HCT116 (cell line): ENCODE measurements at regions of chr1 and their contacts with region 1.

Region 1: GRCh38 chr1:112337028-112337531 is 58.9 kb upstream of the CTTNBP2NL start:
- DNase-seq: peak; percentile 51
- ATAC-seq: peak; percentile 95
- H3K4me3 ChIP-seq: peak overlapping the region; percentile 21 to 50
- H3K27ac ChIP-seq: no peak overlapping the region
- H3K4me1 ChIP-seq: peaks cover 4 to 8% of the 10 kb centered on the region in 2 experiments
- H3K27me3 ChIP-seq: peaks cover 17% of the 10 kb centered on the region; the same call in 1 of the 2 replicates
- CTCF ChIP-seq: peak; percentile 73 to 90 (median 76)
- POLR2A ChIP-seq: no peak
- RAD21 ChIP-seq: peak; percentile 86

Region 2: DNA sequence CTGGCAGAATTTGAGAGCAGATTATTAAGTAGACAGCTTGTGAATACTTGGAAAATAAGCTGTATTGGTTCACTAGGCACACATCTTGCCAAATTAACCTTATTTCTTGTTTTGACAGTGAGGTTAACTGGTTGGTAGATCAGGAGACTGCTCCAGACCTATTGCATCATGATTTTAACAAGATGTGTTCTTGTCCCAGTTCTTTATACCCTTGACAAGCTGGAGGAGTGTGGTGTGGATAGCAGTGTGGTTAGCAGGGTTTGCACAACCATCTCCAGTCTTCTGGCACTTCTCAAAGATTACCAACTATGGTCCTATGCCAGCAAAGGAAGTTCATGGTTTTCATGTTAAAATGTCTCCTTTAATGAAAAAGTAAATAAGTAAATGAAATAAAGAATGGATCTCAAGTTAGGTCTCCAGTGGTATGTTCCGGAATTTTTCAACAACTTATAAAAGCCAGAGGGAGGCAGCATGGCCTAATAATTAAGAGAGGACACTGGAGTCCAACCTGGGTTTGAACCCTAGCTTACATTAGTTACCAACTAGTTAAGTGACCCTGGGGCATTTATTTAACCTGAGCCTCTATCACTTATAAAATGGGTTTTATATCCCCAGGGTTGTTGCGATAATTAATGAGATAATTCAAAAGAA is 547.3 kb before region 1 on chr1:
- CTCF ChIA-PET with region 1: interaction called, 5 read pairs
- POLR2A ChIA-PET with region 1: no interaction called
- RAD21 ChIA-PET with region 1: no interaction called
- intact Hi-C with region 1: loop called (anchors 10 kb)
- DNase-seq: no peak
- ATAC-seq: no peak
- H3K4me3 ChIP-seq: no peak overlapping the region
- H3K27ac ChIP-seq: no peak overlapping the region
- H3K4me1 ChIP-seq: no peaks in the 10 kb centered on the region
- H3K27me3 ChIP-seq: peaks cover 39% of the 10 kb centered on the region
- CTCF ChIP-seq: 0 out of 6 replicates have a peak, but pooled peaks of 1 of the 3 experiments have one; percentile 9
- POLR2A ChIP-seq: no peak
- RAD21 ChIP-seq: peak; percentile 17; the same call in 1 of the 2 replicates

Region 3: GRCh38 chr1:112169517-112169916 is 167.6 kb before region 1 on chr1:
- CTCF ChIA-PET with region 1: no interaction called
- POLR2A ChIA-PET with region 1: no interaction called
- RAD21 ChIA-PET with region 1: no interaction called
- intact Hi-C with region 1: loop called (anchors 10 kb)
- DNase-seq: no peak
- ATAC-seq: no peak
- H3K4me3 ChIP-seq: no peak overlapping the region
- H3K27ac ChIP-seq: no peak overlapping the region
- H3K4me1 ChIP-seq: no peaks in the 10 kb centered on the region
- H3K27me3 ChIP-seq: peaks cover 40% of the 10 kb centered on the region
- CTCF ChIP-seq: no peak
- POLR2A ChIP-seq: no peak
- RAD21 ChIP-seq: no peak

Region 4: DNA sequence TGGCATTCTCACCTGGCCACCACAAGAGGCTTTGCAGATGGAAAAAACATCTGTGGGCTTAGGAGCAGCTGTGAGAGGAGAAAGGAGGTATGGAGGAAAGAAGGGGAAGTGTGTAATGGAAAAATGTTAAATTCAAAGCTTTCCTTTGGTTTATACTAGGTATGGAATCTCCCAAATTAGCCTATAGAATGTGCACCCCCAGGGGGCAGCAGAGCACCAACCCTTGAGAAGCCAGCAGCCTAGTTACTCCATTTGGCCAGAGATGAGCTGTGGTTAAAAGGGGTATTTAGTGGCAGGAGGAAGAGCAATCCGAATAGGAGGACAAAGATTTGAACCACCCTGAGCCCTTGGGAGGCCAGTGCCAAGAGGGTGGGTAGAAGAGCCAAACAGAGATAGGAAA is 38.5 kb before region 1 on chr1:
- CTCF ChIA-PET with region 1: interaction called, 31 read pairs
- POLR2A ChIA-PET with region 1: no interaction called
- RAD21 ChIA-PET with region 1: interaction called, 3 to 4 read pairs
- intact Hi-C with region 1: loop called (anchors 2 kb)
- DNase-seq: peak; percentile 48
- ATAC-seq: peak; percentile 94
- H3K4me3 ChIP-seq: no peak overlapping the region
- H3K27ac ChIP-seq: no peak overlapping the region
- H3K4me1 ChIP-seq: no peaks in the 10 kb centered on the region
- H3K27me3 ChIP-seq: peaks cover 36% of the 10 kb centered on the region
- CTCF ChIP-seq: peak; percentile 70 to 89 (median 83)
- POLR2A ChIP-seq: no peak
- RAD21 ChIP-seq: peak; percentile 70

Region 5: DNA sequence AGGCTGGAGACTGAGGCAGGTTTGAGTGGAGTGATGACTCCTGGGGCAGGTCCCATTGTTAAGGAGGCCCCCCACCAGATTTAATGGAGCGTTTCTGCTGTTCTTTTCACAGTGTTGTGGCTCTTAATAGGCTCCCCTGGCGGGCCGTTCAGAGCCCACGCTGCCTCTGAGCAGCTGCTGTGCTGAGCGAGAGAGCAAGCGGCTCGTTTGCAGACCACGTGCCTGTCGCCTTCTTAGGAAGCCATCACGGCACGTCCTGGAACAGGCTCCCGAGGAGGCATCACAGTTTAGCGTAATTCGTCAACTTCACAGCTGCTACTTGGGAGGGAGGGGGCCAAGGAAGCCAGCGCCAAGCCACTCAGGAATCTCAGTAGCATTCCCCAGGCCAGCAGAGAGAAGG is 11.6 kb before region 1 on chr1:
- CTCF ChIA-PET with region 1: interaction called, 10 read pairs
- POLR2A ChIA-PET with region 1: no interaction called
- RAD21 ChIA-PET with region 1: no interaction called
- intact Hi-C with region 1: no loop called
- DNase-seq: no peak
- ATAC-seq: no peak
- H3K4me3 ChIP-seq: no peak overlapping the region
- H3K27ac ChIP-seq: no peak overlapping the region
- H3K4me1 ChIP-seq: no peaks in the 10 kb centered on the region
- H3K27me3 ChIP-seq: peaks cover 12% of the 10 kb centered on the region
- CTCF ChIP-seq: no peak
- POLR2A ChIP-seq: no peak
- RAD21 ChIP-seq: no peak

Region 6: GRCh38 chr1:112369392-112370285 is 32.6 kb after region 1 on chr1:
- CTCF ChIA-PET with region 1: interaction called, 11 read pairs
- POLR2A ChIA-PET with region 1: no interaction called
- RAD21 ChIA-PET with region 1: no interaction called
- intact Hi-C with region 1: no loop called
- DNase-seq: peak; percentile 76
- ATAC-seq: peak; percentile 100
- H3K4me3 ChIP-seq: peak overlapping the region in 1 of 2 experiments; percentile 21; a peak in 1 of 4 replicates
- H3K27ac ChIP-seq: no peak overlapping the region
- H3K4me1 ChIP-seq: peaks cover 0 to 4% of the 10 kb centered on the region in 2 experiments; a peak in 1 of 4 replicates
- H3K27me3 ChIP-seq: no peaks in the 10 kb centered on the region
- CTCF ChIP-seq: peak; percentile 97 to 99 (median 98)
- POLR2A ChIP-seq: no peak
- RAD21 ChIP-seq: peak; percentile 95